ENCODE measurements at regions of chr4 and their contacts with region 1.

Region 1: GRCh38 chr4:152500800-152501434 is 35.0 kb downstream of the FBXW7 start:
- DNase-seq: peak; percentile 84
- ATAC-seq: peak; percentile 85
- H3K4me3 Mint-ChIP-seq: no peak overlapping the region
- H3K27ac Mint-ChIP-seq: no peak overlapping the region
- H3K4me1 Mint-ChIP-seq: peaks cover 14% of the 10 kb centered on the region
- H3K27me3 Mint-ChIP-seq: no peaks in the 10 kb centered on the region

Region 2: GRCh38 chr4:152485726-152486276 is 15.1 kb before region 1 on chr4:
- CTCF ChIA-PET with region 1: interaction called, 26 read pairs
- POLR2A ChIA-PET with region 1: no interaction called
- DNase-seq: peak; percentile 71
- ATAC-seq: peak; percentile 99
- H3K4me3 Mint-ChIP-seq: peak overlapping the region; percentile 54
- H3K27ac Mint-ChIP-seq: peak overlapping the region; percentile 70
- H3K4me1 Mint-ChIP-seq: peaks cover 35% of the 10 kb centered on the region
- H3K27me3 Mint-ChIP-seq: no peaks in the 10 kb centered on the region

Region 3: DNA sequence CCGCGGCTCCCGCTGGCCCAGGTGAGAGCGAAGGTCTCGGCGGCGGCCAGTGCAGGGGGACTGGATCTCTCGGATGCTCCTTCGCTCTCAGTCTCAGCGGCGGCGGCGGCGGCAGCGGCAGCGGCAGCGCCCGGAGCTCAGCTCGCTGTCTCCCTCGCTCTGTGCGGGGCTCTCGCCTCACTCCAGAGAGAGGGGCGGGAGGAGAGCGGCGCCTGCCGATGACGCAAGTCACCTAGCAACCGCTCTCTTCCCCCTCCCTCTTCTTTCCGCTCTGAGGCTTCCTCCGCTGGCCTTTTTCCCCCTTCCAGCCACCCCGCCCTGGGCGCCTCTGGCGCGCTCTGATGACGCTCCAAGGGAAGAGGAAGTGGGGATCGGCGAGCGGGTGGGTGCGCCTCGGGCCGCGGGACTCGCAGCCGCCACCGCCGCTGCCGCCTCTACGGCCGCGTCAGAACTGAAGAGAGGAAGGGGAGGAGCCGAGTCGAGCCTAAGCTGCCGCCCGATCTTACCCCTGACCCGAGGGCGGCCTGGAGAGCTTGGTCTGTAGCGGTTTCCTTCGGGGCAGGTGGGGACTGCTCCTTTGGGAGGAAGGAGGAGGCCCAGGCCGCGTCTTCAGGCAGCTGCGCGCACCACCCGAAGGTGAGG is 35.1 kb after region 1 on chr4 and contains the start of gene FBXW7:
- CTCF ChIA-PET with region 1: interaction called, 85 read pairs
- POLR2A ChIA-PET with region 1: interaction called, 12 read pairs
- DNase-seq: peak; percentile 100
- ATAC-seq: peak; percentile 86
- H3K4me3 Mint-ChIP-seq: peak within 1 kb of the TSS; percentile 98
- H3K27ac Mint-ChIP-seq: peak within 1 kb of the TSS; percentile 100
- H3K4me1 Mint-ChIP-seq: peaks cover 45% of the 10 kb centered on the region
- H3K27me3 Mint-ChIP-seq: no peaks in the 10 kb centered on the region
- total RNA-seq, gene FBXW7: 50.6 to 56.9 TPM

Region 4: DNA sequence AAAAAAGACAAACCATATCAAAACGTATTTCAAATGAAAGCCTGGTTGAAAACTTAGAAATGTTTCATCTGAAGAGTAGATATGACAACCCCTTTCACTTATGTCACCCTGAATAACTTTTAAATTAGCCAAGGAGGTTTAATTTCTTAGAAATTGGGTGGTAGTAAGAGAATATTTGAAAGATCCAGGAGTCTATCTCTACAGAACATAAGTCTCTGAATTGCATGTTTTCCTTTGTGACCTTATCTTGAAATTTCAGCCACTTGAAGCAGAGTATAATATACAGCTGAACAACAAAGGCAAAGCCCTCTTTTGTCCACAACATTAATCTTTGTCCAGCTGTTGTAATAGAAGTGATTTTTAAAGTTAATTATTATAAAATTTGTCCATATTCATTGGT is 129.4 kb after region 1 on chr4:
- CTCF ChIA-PET with region 1: interaction called, 18 read pairs
- POLR2A ChIA-PET with region 1: no interaction called
- DNase-seq: no peak
- ATAC-seq: no peak
- H3K4me3 Mint-ChIP-seq: no peak overlapping the region
- H3K27ac Mint-ChIP-seq: no peak overlapping the region
- H3K4me1 Mint-ChIP-seq: no peaks in the 10 kb centered on the region
- H3K27me3 Mint-ChIP-seq: no peaks in the 10 kb centered on the region

Region 5: DNA sequence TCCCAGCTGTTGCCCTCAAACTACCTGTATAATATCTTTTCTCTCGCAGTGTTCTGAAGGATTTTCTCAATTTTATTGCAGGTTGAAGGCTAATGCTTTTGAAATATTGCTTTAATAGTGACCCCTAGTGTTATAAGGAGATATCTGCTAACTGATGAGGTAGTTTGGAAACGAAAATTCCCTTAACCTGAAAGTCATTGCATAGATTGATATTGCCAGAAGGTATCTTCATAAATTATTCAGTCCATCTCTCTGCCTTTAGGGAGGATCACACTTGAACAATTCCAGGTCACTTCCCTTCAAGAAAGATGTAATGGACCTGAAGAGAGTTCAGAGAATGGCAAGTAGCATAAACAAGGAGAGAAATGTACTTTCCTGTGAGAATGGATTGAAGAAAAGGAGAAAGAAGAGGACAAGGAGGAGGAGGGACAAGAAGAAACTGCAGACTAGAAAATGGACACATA is 234.5 kb after region 1 on chr4:
- CTCF ChIA-PET with region 1: interaction called, 25 read pairs
- POLR2A ChIA-PET with region 1: no interaction called
- DNase-seq: no peak
- ATAC-seq: no peak
- H3K4me3 Mint-ChIP-seq: no peak overlapping the region
- H3K27ac Mint-ChIP-seq: no peak overlapping the region
- H3K4me1 Mint-ChIP-seq: no peaks in the 10 kb centered on the region
- H3K27me3 Mint-ChIP-seq: peaks cover 8% of the 10 kb centered on the region

Measured in activated CD8-positive, alpha-beta T cell treated with anti-CD3 and anti-CD28 coated beads, Interleukin-2, amount 10 ng/mL, durations not matched to agents 7 days and 5 days (primary cell).